Mammary epithelial cell (primary cell): ENCODE measurements at regions of chrX and their contacts with region 1.

Region 1: GRCh38 chrX:130268500-130269170 is at the start of gene ZNF280C:
- DNase-seq: peak; percentile 86
- H3K4me3 ChIP-seq: peak within 1 kb of the TSS; percentile 55 to 80 (median 74)
- H3K27ac ChIP-seq: peak within 1 kb of the TSS; percentile 62
- H3K4me1 ChIP-seq: no peaks in the 10 kb centered on the region
- H3K27me3 ChIP-seq: no peaks in the 10 kb centered on the region
- CTCF ChIP-seq: peak in 1 of 2 donors; percentile 41
- total RNA-seq, gene ZNF280C: 4.8 to 5.1 TPM

Region 2: GRCh38 chrX:130330706-130331105 is 62.1 kb after region 1 on chrX:
- CTCF ChIA-PET with region 1: no interaction called
- dilution Hi-C with region 1: no loop called
- in situ Hi-C with region 1: no loop called
- intact Hi-C with region 1: loop called (anchors 2 kb)
- DNase-seq: peak; percentile 46
- H3K4me3 ChIP-seq: no peak overlapping the region
- H3K27ac ChIP-seq: no peak overlapping the region
- H3K4me1 ChIP-seq: no peaks in the 10 kb centered on the region
- H3K27me3 ChIP-seq: no peaks in the 10 kb centered on the region
- CTCF ChIP-seq: peak; percentile 50 to 66